ENCODE measurements at regions of chr1 and their contacts with region 1.

Region 1: DNA sequence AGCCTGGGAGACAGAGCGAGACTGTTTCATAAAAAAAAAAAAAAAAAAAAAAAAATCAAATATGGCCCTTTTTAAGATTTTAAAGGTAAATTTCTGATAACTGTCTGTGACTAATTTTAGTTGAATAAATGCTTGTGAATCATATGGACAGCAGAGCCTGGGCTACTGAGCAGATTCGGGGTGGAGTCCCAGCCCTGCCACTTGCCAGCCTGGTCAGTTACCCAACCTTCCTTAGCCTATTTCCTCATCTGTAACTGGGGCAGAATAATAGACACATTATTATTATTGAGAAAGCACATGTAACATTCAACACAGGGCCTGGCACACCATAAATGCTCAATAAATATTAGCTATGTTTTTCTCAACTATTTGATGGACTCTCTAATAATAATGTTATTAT is 11.2 kb upstream of the H3-3A start:
- DNase-seq: no peak
- ATAC-seq: no peak
- H3K4me3 ChIP-seq: no peak overlapping the region
- H3K27ac ChIP-seq: no peak overlapping the region
- H3K4me1 ChIP-seq: no peaks in the 10 kb centered on the region
- H3K27me3 ChIP-seq: no peaks in the 10 kb centered on the region

Region 2: DNA sequence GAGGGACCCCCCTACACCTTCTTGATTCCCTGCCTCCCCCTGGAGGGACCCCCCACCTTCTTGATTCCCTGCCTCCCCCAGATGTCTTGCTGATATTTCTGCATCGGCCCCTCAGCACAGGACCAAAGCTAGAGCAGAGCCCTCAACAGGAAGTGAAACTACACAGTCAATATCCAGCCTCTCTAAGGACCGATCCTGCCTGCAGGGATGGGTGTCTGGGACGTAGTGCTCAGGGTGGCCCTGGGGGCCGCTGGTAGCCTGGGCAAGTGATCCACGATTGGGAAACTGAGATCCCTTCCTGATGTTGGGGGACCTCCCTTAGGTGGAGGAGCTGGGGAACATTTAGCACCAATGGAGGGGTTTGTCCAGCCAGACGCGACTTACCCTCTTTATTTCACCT is 106.4 kb before region 1 on chr1:
- intact Hi-C with region 1: loop called in 1 of 2 experiments (anchors 5 kb)
- DNase-seq: peak in 1 of 2 donors; percentile 36
- ATAC-seq: no peak
- H3K4me3 ChIP-seq: no peak overlapping the region
- H3K27ac ChIP-seq: no peak overlapping the region
- H3K4me1 ChIP-seq: no peaks in the 10 kb centered on the region
- H3K27me3 ChIP-seq: no peaks in the 10 kb centered on the region

Measured in aorta (tissue), 5 donors.